Activated CD8-positive, alpha-beta T cell treated with anti-CD3 and anti-CD28 coated beads for 36 hours (primary cell): ENCODE measurements at regions of chr3 and their contacts with region 1.

Region 1: DNA sequence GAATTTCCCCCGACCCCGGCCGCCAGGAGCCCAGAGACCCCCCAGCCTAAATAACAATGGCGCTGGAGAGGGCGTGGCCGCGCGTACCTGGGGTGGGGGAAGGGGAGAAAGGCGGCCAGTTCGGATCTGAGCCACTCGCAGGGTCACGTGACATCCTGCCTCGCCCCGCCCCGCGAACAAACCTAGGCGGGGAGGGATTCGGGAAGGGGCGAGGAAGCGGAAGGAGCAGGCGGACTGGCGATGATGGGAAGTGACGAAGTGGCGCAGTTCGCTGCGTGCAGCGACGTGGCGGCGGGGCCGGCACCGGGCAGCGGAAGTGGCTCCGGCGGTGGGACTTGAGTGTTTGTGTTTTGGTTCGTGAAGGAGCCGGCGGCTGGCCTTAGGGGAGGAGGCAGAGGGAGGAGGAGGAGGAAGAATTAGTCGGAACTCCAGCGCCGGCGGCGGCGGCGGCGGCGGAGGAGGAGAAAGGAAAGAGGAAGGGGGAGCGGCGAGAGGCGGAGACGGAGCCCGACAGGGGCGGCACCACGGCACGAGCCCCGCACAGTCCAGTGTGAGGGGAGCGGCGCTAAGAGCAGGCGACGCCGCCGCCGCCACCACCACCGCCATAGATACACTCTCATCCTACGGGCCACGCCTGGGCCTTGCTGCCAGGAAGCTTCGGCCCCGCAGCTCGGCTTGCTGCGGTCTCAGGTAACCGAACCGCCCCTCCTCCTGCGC is at the start of gene RAB5A:
- DNase-seq: peak; percentile 99
- ATAC-seq: peak; percentile 91
- H3K4me3 Mint-ChIP-seq: peak within 1 kb of the TSS; percentile 89
- H3K27ac Mint-ChIP-seq: peak within 1 kb of the TSS; percentile 99
- H3K4me1 Mint-ChIP-seq: peaks cover 40% of the 10 kb centered on the region
- H3K27me3 Mint-ChIP-seq: no peaks in the 10 kb centered on the region
- CTCF ChIP-seq: no peak
- total RNA-seq, gene RAB5A: 54.3 to 55.8 TPM

Region 2: DNA sequence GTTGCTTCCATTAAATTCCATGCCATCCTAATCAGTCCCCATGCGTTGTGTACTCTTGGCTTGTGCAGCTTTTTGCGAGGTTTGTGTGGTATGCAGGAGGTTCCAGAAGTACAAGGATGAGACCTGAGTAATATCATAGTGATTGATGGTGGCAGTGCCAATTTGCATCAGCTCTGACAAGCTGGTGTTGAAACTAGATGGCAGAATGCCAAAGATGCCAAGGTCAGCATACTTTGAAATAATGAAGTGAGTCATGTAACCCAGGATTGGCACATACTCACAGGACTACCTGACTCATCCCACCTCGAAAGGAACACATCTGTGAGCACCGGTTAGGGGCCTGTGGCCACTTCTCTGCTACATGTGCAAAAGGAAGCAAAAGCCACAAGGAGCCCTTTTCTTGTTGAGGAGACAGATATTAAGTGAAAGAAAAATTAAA is 107.6 kb after region 1 on chr3:
- CTCF ChIA-PET with region 1: no interaction called
- POLR2A ChIA-PET with region 1: no interaction called
- intact Hi-C with region 1: loop called (anchors 5 kb)
- DNase-seq: peak; percentile 90
- ATAC-seq: peak; percentile 89
- H3K4me3 Mint-ChIP-seq: no peak overlapping the region
- H3K27ac Mint-ChIP-seq: no peak overlapping the region
- H3K4me1 Mint-ChIP-seq: peaks cover 23% of the 10 kb centered on the region
- H3K27me3 Mint-ChIP-seq: no peaks in the 10 kb centered on the region
- CTCF ChIP-seq: no peak

Region 3: GRCh38 chr3:20185701-20186598 is 239.0 kb after region 1 on chr3 and contains the start of gene SGO1:
- CTCF ChIA-PET with region 1: no interaction called
- POLR2A ChIA-PET with region 1: interaction called, 5 read pairs
- intact Hi-C with region 1: loop called (anchors 5 kb)
- DNase-seq: peak; percentile 100
- ATAC-seq: peak; percentile 96
- H3K4me3 Mint-ChIP-seq: no peak within 1 kb of the TSS
- H3K27ac Mint-ChIP-seq: no peak within 1 kb of the TSS
- H3K4me1 Mint-ChIP-seq: peaks cover 5% of the 10 kb centered on the region
- H3K27me3 Mint-ChIP-seq: no peaks in the 10 kb centered on the region
- CTCF ChIP-seq: no peak
- total RNA-seq, gene SGO1: 25.6 to 26.5 TPM